Dorsolateral prefrontal cortex (tissue), 120 donors: ENCODE measurements at regions of chr7 and their contacts with region 1.

Region 1: DNA sequence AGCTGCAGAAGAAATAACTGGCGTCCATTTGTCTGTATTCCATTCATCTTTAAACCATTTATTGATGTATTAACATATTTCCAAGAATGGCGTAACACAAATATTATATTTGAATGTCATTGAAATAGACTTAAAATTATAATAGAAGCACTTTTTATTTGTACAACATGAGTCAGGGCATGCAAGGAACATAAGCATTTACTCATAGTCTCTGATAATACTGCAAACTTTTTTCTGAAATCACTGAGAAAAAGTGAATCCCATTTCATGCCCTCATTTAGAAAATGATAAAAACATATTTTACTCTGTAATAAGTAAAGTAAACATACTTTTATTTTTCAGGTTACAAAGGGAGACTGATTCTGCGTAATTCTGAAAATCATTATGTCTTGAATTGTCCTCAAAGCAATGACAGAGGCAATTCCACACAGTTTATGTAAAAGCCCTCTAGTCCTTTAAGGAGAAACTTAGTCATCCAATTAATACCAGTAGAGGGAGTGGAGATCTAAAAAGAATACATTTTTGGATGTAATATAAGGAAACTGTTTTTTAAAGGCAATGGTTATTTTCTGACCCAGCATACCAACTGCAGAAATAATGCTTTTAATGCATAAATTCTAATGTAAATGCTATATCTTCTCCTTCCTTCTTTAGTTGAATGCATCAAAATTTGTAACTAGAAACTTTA is 58.1 kb downstream of the AGMO start:
- DNase-seq: no peak
- H3K4me3 ChIP-seq: no peak overlapping the region
- H3K27ac ChIP-seq: no peak overlapping the region
- H3K27me3 ChIP-seq: peaks cover 0 to 6% (median 0%) of the 10 kb centered on the region in 45 donors
- CTCF ChIP-seq: peak in 4 of 56 donors; percentile 8 to 20 (median 14)

Region 2: DNA sequence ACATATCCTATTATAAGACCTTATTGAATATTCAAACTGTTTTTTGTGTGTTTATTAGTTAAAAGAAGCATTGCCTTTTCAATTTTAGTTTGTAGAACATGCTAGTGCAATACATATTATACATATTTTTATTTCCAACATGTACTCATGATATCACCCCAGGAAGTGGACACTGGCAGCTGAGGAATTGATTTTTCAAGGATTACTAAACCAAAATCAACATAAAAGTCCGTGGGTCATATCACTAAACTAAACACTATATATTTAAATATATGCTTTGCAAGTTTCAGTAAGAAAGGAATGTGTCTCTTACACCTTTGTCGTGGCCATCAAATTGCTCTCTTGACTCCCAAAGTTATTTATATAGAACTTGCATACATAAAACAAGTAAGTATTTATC is 127.1 kb before region 1 on chr7:
- intact Hi-C with region 1: loop called in 1 of 2 experiments (anchors 10 kb)
- DNase-seq: no peak
- H3K4me3 ChIP-seq: no peak overlapping the region
- H3K27ac ChIP-seq: peak overlapping the region in 1 of 59 donors; percentile 2
- H3K27me3 ChIP-seq: no peaks in the 10 kb centered on the region
- CTCF ChIP-seq: no peak

Region 3: DNA sequence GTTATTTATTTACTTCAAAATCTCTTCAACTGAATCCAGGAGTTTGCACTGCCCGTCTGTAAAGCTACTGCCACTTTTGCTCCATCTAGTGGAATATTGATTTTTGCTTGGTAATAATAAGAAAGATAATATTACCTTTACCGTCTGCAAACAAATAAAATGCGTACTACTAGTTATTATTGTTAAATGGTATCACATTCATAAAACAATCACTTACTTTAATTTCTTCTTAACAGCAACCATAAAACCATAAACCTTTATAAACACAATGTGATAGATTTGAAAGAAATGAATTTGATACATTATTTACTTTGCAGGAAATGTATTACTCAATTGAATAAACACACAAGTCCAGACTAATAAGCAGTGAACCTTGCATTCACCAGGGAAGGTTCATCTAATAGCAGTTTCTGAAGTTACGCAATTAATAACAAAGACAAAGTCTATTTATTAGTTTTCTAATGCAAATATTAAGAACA is 51.7 kb after region 1 on chr7:
- intact Hi-C with region 1: loop called in 1 of 2 experiments (anchors 5 kb)
- DNase-seq: no peak
- H3K4me3 ChIP-seq: peak overlapping the region in 1 of 59 donors; percentile 2
- H3K27ac ChIP-seq: peak overlapping the region in 2 of 59 donors; percentile 42 to 47
- H3K27me3 ChIP-seq: no peaks in the 10 kb centered on the region
- CTCF ChIP-seq: peak in 50 of 56 donors; percentile 11 to 67 (median 45)

Region 4: GRCh38 chr7:15581352-15581951 is 77.7 kb after region 1 on chr7:
- intact Hi-C with region 1: no loop called
- DNase-seq: no peak
- H3K4me3 ChIP-seq: no peak overlapping the region
- H3K27ac ChIP-seq: peak overlapping the region in 2 of 59 donors; percentile 4 to 26
- H3K27me3 ChIP-seq: no peaks in the 10 kb centered on the region
- CTCF ChIP-seq: no peak